ENCODE measurements at regions of chr12 and their contacts with region 1.

Region 1: DNA sequence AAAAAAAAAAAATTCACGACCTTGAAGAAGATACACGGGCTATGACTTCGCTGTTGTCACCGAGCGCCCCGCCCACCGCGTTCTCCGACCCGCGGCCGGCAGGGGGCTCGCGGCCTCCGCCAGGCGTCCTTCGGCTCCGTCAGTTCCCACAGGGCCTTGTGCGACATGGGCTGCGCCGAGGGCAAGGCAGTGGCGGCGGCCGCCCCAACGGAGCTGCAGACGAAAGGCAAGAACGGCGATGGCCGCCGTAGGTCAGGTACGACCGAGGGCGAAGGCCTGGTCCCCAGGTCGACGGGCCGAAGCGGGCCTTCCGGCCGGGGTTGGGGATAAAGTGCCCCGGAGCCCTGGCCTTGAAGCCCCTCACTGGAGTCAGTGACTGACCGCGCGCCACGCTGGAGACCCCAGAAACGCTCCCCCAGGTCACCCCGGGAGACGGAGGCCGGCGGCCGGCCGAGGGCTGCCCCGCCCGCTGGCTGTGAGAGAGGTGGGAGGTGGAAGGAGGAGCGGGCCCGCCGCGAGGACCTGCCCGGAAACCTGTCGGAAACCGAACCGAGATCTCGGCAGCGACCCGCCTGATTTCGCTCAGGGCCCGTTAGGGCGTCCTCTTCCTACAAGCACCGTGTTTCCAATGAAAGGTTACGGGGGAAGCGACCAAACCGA is at the start of gene TXNRD1:
- DNase-seq: peak; percentile 92
- ATAC-seq: peak; percentile 79
- H3K4me3 Mint-ChIP-seq: peak within 1 kb of the TSS; percentile 71
- H3K27ac Mint-ChIP-seq: peak within 1 kb of the TSS; percentile 80
- H3K4me1 Mint-ChIP-seq: peaks cover 45% of the 10 kb centered on the region
- H3K27me3 Mint-ChIP-seq: peaks cover 2% of the 10 kb centered on the region
- total RNA-seq, gene TXNRD1: 66.7 to 88.0 TPM

Region 2: DNA sequence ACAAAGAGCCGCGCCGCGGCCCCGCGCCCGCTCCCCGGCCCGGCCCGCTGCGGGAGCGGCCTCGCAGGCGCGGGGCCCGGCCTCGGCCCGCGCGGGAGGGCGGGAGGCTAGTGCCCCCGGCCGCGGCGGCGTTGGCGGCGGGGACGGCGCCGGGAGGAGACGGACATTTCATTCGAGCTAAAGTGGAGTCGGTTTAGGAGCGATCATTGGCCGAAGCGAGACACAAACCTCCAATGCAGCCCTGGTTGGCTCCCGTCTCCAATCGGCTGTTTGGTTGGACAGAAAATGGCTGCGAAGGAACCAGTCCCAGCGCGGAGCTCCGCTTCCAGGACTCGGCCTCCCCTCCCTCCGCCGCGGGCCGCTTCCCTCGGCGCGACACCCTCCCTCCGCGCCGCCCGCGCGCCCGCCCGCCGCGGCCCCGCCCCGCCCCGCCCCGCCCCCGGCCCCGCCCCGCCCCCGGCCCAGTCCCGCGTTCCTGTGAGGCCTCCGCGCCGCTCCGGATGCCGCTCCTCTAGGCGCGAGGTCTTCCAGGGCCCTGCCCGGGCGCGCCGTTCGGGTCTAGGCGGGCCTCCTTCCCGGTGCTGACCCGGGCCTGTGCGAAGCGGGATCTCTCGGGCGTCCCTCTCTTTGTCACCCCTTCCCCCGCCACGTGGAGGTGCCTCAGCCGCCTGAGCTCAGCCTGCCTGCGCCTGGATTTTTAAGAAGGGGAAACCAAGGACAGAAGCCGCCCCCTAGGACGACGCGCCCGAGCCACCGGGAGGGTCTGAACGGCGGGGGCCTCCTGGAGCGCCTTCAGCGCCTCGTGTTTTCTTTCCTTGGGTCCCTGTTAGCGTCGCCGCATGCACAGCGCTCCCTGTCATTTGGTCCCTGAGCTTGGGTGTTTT is 77.6 kb before region 1 on chr12 and contains the start of gene NFYB:
- CTCF ChIA-PET with region 1: interaction called, 3 read pairs
- POLR2A ChIA-PET with region 1: no interaction called
- intact Hi-C with region 1: loop called (anchors 5 kb)
- DNase-seq: peak; percentile 95
- ATAC-seq: peak; percentile 98
- H3K4me3 Mint-ChIP-seq: peak within 1 kb of the TSS; percentile 83
- H3K27ac Mint-ChIP-seq: peak within 1 kb of the TSS; percentile 90
- H3K4me1 Mint-ChIP-seq: peaks cover 19% of the 10 kb centered on the region
- H3K27me3 Mint-ChIP-seq: no peaks in the 10 kb centered on the region
- total RNA-seq, gene NFYB: 18.8 to 27.2 TPM

Region 3: DNA sequence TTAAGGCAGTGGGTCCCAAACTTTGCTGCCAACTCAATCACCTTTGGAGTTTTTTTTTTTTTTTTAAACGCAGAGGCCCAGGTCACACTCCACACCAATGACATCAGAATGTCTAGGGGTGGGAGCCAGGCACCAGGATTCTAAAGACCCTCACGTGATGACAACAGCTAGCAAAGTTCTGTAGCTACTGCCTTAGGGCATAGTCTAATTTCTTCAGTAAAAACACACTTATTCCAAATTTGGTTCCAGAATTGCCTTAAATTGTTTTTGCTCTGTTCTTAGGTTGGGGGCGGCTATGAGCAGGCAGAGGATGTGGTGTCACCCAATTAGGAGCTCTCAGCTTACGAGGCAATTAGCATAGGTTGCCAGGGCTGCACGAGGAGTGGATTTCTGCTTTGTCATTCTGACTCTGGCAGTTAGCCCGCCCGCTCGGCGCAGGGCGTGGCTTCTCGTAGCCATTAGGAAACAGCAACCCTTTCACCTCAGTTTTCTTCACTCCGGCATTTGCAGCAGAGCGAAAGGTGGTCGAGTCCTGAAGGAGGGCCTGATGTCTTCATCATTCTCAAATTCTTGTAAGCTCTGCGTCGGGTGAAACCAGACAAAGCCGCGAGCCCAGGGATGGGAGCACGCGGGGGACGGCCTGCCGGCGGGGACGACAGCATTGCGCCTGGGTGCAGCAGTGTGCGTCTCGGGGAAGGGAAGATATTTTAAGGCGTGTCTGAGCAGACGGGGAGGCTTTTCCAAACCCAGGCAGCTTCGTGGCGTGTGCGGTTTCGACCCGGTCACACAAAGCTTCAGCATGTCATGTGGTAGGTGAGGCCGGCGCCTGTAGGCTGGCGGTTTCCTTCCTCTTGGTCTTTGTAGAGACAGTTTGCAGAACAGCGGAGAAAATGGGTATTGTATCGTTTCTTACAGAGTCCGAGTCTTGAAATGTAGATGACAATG is 71.0 kb after region 1 on chr12:
- CTCF ChIA-PET with region 1: interaction called, 32 read pairs
- POLR2A ChIA-PET with region 1: interaction called, 9 read pairs
- intact Hi-C with region 1: loop called (anchors 1 kb)
- DNase-seq: peak; percentile 95
- ATAC-seq: peak; percentile 84
- H3K4me3 Mint-ChIP-seq: peak overlapping the region; percentile 95
- H3K27ac Mint-ChIP-seq: peak overlapping the region; percentile 97
- H3K4me1 Mint-ChIP-seq: peaks cover 12% of the 10 kb centered on the region
- H3K27me3 Mint-ChIP-seq: no peaks in the 10 kb centered on the region

Region 4: GRCh38 chr12:104358347-104359003 is 142.7 kb after region 1 on chr12:
- CTCF ChIA-PET with region 1: no interaction called
- POLR2A ChIA-PET with region 1: no interaction called
- intact Hi-C with region 1: loop called (anchors 1 kb)
- DNase-seq: peak; percentile 82
- ATAC-seq: peak; percentile 90
- H3K4me3 Mint-ChIP-seq: no peak overlapping the region
- H3K27ac Mint-ChIP-seq: no peak overlapping the region
- H3K4me1 Mint-ChIP-seq: peaks cover 3% of the 10 kb centered on the region
- H3K27me3 Mint-ChIP-seq: no peaks in the 10 kb centered on the region

Region 5: GRCh38 chr12:104671407-104672098 is 455.8 kb after region 1 on chr12:
- CTCF ChIA-PET with region 1: no interaction called
- POLR2A ChIA-PET with region 1: no interaction called
- intact Hi-C with region 1: loop called in 1 of 2 experiments (anchors 5 kb)
- DNase-seq: peak; percentile 95
- ATAC-seq: peak; percentile 84
- H3K4me3 Mint-ChIP-seq: peak overlapping the region; percentile 41
- H3K27ac Mint-ChIP-seq: peak overlapping the region; percentile 93
- H3K4me1 Mint-ChIP-seq: peaks cover 60% of the 10 kb centered on the region
- H3K27me3 Mint-ChIP-seq: no peaks in the 10 kb centered on the region

Measured in activated CD4-positive, alpha-beta T cell treated with anti-CD3 and anti-CD28 coated beads for 36 hours (primary cell).